K562 (cell line): ENCODE measurements at regions of chrX and their contacts with region 1.

Region 1: GRCh38 chrX:23993012-23993633 is 33.9 kb downstream of the KLHL15 start:
- DNase-seq: no peak
- ATAC-seq: no peak
- H3K4me3 ChIP-seq: no peak overlapping the region
- H3K27ac ChIP-seq: no peak overlapping the region
- H3K4me1 ChIP-seq: no peaks in the 10 kb centered on the region
- H3K27me3 ChIP-seq: no peaks in the 10 kb centered on the region
- CTCF ChIP-seq: no peak
- EP300 ChIP-seq: no peak
- POLR2A ChIP-seq: no peak
- RAD21 ChIP-seq: no peak

Region 2: GRCh38 chrX:24005028-24005427 is 11.9 kb after region 1 on chrX:
- CTCF ChIA-PET with region 1: no interaction called
- POLR2A ChIA-PET with region 1: interaction called, 10 read pairs
- in situ Hi-C with region 1: no loop called
- intact Hi-C with region 1: no loop called
- DNase-seq: no peak
- ATAC-seq: no peak
- H3K4me3 ChIP-seq: no peak overlapping the region
- H3K27ac ChIP-seq: no peak overlapping the region
- H3K4me1 ChIP-seq: peaks cover 0 to 7% of the 10 kb centered on the region in 2 experiments; a peak in 3 of 5 replicates
- H3K27me3 ChIP-seq: no peaks in the 10 kb centered on the region
- CTCF ChIP-seq: no peak
- EP300 ChIP-seq: no peak
- POLR2A ChIP-seq: no peak
- RAD21 ChIP-seq: no peak